MCF 10A (cell line): ENCODE measurements at regions of chrX and their contacts with region 1.

Region 1: GRCh38 chrX:21479695-21480270 is 105.6 kb downstream of the CNKSR2 start:
- DNase-seq: peak; percentile 54
- H3K4me3 Mint-ChIP-seq: no peak overlapping the region
- H3K27ac Mint-ChIP-seq: no peak overlapping the region
- H3K4me1 Mint-ChIP-seq: no peaks in the 10 kb centered on the region
- H3K27me3 Mint-ChIP-seq: peaks cover 37% of the 10 kb centered on the region
- CTCF ChIP-seq: peak; percentile 70

Region 2: GRCh38 chrX:21490341-21490740 is 10.6 kb after region 1 on chrX:
- CTCF ChIA-PET with region 1: interaction called, 12 read pairs
- POLR2A ChIA-PET with region 1: no interaction called
- intact Hi-C with region 1: no loop called
- DNase-seq: no peak
- H3K4me3 Mint-ChIP-seq: no peak overlapping the region
- H3K27ac Mint-ChIP-seq: no peak overlapping the region
- H3K4me1 Mint-ChIP-seq: no peaks in the 10 kb centered on the region
- H3K27me3 Mint-ChIP-seq: peaks cover 58% of the 10 kb centered on the region
- CTCF ChIP-seq: no peak

Region 3: GRCh38 chrX:21725496-21725895 is 245.7 kb after region 1 on chrX:
- CTCF ChIA-PET with region 1: interaction called, 13 read pairs
- POLR2A ChIA-PET with region 1: no interaction called
- intact Hi-C with region 1: loop called (anchors 2 kb)
- DNase-seq: peak; percentile 66
- H3K4me3 Mint-ChIP-seq: no peak overlapping the region
- H3K27ac Mint-ChIP-seq: no peak overlapping the region
- H3K4me1 Mint-ChIP-seq: no peaks in the 10 kb centered on the region
- H3K27me3 Mint-ChIP-seq: peaks cover 54% of the 10 kb centered on the region
- CTCF ChIP-seq: peak; percentile 21

Region 4: DNA sequence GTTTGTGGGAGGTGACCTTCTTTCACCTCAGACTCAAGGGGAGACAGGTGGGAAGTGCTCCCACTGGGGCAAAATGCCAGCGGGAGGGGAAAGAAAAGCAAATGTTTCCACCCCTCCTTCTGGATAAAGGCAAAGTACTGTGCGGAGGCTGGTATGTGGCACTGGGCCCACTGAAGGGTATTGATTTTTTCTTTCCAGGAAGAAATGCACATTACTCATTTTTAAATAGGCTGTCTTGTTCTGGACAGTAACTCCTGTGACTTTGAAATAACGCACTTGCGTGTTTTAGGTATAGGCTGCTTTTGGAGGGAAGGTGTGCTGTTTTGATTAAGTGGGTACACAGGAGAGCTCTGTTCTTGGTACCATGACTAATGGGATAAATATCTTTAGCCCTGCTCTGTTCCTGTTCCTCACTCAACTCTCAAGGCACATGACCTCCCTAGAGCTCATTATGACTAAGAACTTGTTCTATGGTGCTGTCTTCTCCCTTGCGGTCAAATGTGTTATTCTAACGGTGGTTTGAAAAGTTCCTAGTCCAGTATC is 319.0 kb after region 1 on chrX:
- CTCF ChIA-PET with region 1: no interaction called
- POLR2A ChIA-PET with region 1: no interaction called
- intact Hi-C with region 1: no loop called
- DNase-seq: peak; percentile 77
- H3K4me3 Mint-ChIP-seq: peak overlapping the region; percentile 53
- H3K27ac Mint-ChIP-seq: peak overlapping the region; percentile 83
- H3K4me1 Mint-ChIP-seq: peaks cover 31% of the 10 kb centered on the region
- H3K27me3 Mint-ChIP-seq: peaks cover 62% of the 10 kb centered on the region
- CTCF ChIP-seq: no peak

Region 5: GRCh38 chrX:21972721-21973120 is 492.9 kb after region 1 on chrX:
- CTCF ChIA-PET with region 1: no interaction called
- POLR2A ChIA-PET with region 1: no interaction called
- intact Hi-C with region 1: loop called (anchors 5 kb)
- DNase-seq: no peak
- H3K4me3 Mint-ChIP-seq: no peak overlapping the region
- H3K27ac Mint-ChIP-seq: no peak overlapping the region
- H3K4me1 Mint-ChIP-seq: peaks cover 6% of the 10 kb centered on the region
- H3K27me3 Mint-ChIP-seq: peaks cover 65% of the 10 kb centered on the region
- CTCF ChIP-seq: no peak